WTC11 (cell line): ENCODE measurements at regions of chr10 and their contacts with region 1.

Region 1: DNA sequence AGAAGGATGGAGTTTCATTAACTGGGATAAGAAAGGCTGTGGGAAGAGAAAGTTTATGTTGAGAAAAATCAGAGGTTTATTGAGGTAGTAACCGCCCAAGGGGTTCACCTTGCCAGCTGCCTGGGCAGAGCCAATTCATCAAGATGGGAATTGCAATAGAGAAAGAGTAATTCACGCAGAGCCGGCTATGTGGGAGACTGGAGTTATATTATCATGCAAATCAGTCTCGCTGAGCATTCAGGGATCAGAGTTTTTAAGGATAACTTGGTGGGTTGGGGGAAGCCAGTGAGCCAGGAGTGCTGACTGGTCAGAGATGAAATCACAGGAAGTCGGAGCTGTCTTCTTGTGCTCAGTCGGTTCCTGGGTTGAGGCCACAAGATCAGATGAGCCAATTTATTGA is 70.6 kb downstream of the MALRD1 start:
- DNase-seq: peak; percentile 27
- ATAC-seq: peak; percentile 94
- H3K4me3 Mint-ChIP-seq: no peak overlapping the region
- H3K27ac Mint-ChIP-seq: peak overlapping the region; percentile 75
- H3K4me1 Mint-ChIP-seq: peaks cover 30% of the 10 kb centered on the region
- H3K27me3 Mint-ChIP-seq: peaks cover 4% of the 10 kb centered on the region
- CTCF ChIP-seq: no peak

Region 2: GRCh38 chr10:19058046-19058445 is 61.1 kb before region 1 on chr10:
- CTCF ChIA-PET with region 1: no interaction called
- POLR2A ChIA-PET with region 1: no interaction called
- DNase-seq: no peak
- ATAC-seq: no peak
- H3K4me3 Mint-ChIP-seq: no peak overlapping the region
- H3K27ac Mint-ChIP-seq: no peak overlapping the region
- H3K4me1 Mint-ChIP-seq: peaks cover 7% of the 10 kb centered on the region
- H3K27me3 Mint-ChIP-seq: no peaks in the 10 kb centered on the region
- CTCF ChIP-seq: no peak

Region 3: GRCh38 chr10:19133992-19134391 is 14.8 kb after region 1 on chr10:
- CTCF ChIA-PET with region 1: no interaction called
- POLR2A ChIA-PET with region 1: no interaction called
- DNase-seq: no peak
- ATAC-seq: 0 out of 2 replicates have a peak, but pooled peaks have one; percentile 51
- H3K4me3 Mint-ChIP-seq: no peak overlapping the region
- H3K27ac Mint-ChIP-seq: no peak overlapping the region
- H3K4me1 Mint-ChIP-seq: peaks cover 8% of the 10 kb centered on the region
- H3K27me3 Mint-ChIP-seq: no peaks in the 10 kb centered on the region
- CTCF ChIP-seq: no peak

Region 4: DNA sequence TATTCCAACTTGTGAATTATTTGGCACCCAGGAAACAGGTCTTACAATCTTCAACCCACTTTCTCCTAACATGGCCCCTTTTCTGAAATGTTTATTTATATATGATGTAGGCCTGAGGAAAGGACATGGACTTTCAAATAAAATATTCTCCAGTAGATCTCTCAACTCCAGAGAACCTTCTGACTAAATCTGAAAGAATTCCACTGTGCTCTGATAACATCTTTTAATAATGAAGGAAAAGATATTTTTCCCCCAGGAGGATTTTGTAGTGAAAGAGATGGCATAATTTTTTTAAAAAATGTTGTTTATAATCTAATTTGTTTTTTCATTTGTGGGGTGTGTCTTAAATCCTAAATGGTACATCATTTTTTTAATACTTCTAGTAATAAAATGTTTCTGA is 101.6 kb after region 1 on chr10:
- CTCF ChIA-PET with region 1: no interaction called
- POLR2A ChIA-PET with region 1: interaction called, 11 read pairs
- DNase-seq: no peak
- ATAC-seq: no peak
- H3K4me3 Mint-ChIP-seq: no peak overlapping the region
- H3K27ac Mint-ChIP-seq: no peak overlapping the region
- H3K4me1 Mint-ChIP-seq: no peaks in the 10 kb centered on the region
- H3K27me3 Mint-ChIP-seq: no peaks in the 10 kb centered on the region; the same call in none of the 2 replicates
- CTCF ChIP-seq: no peak